ENCODE measurements at regions of chr12 and their contacts with region 1.

Region 1: GRCh38 chr12:106223485-106224354 is 24.1 kb downstream of the CKAP4 start:
- DNase-seq: peak; percentile 59 to 67 (median 60)
- H3K4me3 ChIP-seq: no peak overlapping the region
- H3K4me3 Mint-ChIP-seq: no peak overlapping the region
- H3K27ac ChIP-seq: no peak overlapping the region
- H3K27ac Mint-ChIP-seq: no peak overlapping the region
- H3K4me1 ChIP-seq: peaks cover 18 to 26% of the 10 kb centered on the region in 2 donors
- H3K4me1 Mint-ChIP-seq: peaks cover 26% of the 10 kb centered on the region
- H3K27me3 ChIP-seq: peaks cover 4 to 13% of the 10 kb centered on the region in 2 donors
- H3K27me3 Mint-ChIP-seq: peaks cover 13 to 36% (median 28%) of the 10 kb centered on the region in 3 donors
- CTCF ChIP-seq: peak; percentile 94

Region 2: DNA sequence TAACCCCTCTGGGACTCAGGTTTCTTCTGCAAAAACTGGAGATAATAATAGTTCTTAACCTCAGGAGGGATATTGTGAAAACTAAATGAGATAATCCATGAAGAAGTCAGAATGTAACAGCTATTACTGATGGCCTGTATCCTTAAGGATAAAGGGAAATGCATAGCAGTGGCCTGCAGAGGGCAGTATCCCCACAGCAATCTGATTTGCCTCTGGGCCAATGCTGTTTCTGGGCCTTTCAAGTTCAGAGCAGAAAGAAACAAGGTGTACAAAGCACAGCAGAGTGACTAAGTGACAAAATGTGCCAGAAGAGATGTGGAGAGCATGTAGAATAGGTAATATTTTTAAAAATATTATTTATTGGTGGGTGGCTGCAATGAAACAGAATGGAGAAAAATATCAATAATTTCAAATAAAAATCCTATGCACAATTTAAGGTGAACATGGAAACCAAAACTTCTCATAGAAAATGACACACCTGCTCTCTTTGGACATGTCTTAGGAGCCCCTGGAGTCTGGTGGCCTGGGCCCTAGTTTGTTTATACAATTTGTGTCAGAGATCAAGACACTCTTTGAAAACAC is 803.0 kb before region 1 on chr12:
- intact Hi-C with region 1: loop called in 1 of 2 experiments (anchors 10 kb)
- DNase-seq: peak; percentile 7 to 44 (median 38)
- H3K4me3 ChIP-seq: no peak overlapping the region
- H3K4me3 Mint-ChIP-seq: no peak overlapping the region
- H3K27ac ChIP-seq: no peak overlapping the region
- H3K27ac Mint-ChIP-seq: no peak overlapping the region
- H3K4me1 ChIP-seq: no peaks in the 10 kb centered on the region
- H3K4me1 Mint-ChIP-seq: no peaks in the 10 kb centered on the region
- H3K27me3 ChIP-seq: peaks cover 0 to 2% of the 10 kb centered on the region in 2 donors
- H3K27me3 Mint-ChIP-seq: peaks cover 14 to 16% (median 15%) of the 10 kb centered on the region in 3 donors
- CTCF ChIP-seq: peak; percentile 89

Region 3: GRCh38 chr12:106247674-106248311 is 24.1 kb after region 1 on chr12 and contains the start of gene CKAP4:
- intact Hi-C with region 1: loop called in 1 of 2 experiments (anchors 2 kb)
- DNase-seq: peak; percentile 53 to 67 (median 65)
- H3K4me3 ChIP-seq: peak within 1 kb of the TSS; percentile 60 to 90 (median 77)
- H3K4me3 Mint-ChIP-seq: peak within 1 kb of the TSS; percentile 86 to 88
- H3K27ac ChIP-seq: peak within 1 kb of the TSS; percentile 99
- H3K27ac Mint-ChIP-seq: peak within 1 kb of the TSS; percentile 96 to 99 (median 98)
- H3K4me1 ChIP-seq: peaks cover 76 to 81% of the 10 kb centered on the region in 2 donors
- H3K4me1 Mint-ChIP-seq: peaks cover 74% of the 10 kb centered on the region
- H3K27me3 ChIP-seq: no peaks in the 10 kb centered on the region
- H3K27me3 Mint-ChIP-seq: peaks cover 0 to 4% (median 0%) of the 10 kb centered on the region in 3 donors
- CTCF ChIP-seq: no peak
- polyA plus RNA-seq, gene CKAP4: 46.9 to 59.4 (median 55.9) TPM

Region 4: GRCh38 chr12:106282457-106283097 is 58.9 kb after region 1 on chr12:
- intact Hi-C with region 1: loop called (anchors 1 to 2 kb)
- DNase-seq: peak; percentile 72 to 88 (median 83)
- H3K4me3 ChIP-seq: no peak overlapping the region
- H3K4me3 Mint-ChIP-seq: no peak overlapping the region
- H3K27ac ChIP-seq: peak overlapping the region in 1 of 2 donors; percentile 63
- H3K27ac Mint-ChIP-seq: peak overlapping the region; percentile 65 to 91 (median 87)
- H3K4me1 ChIP-seq: peaks cover 14 to 26% of the 10 kb centered on the region in 2 donors
- H3K4me1 Mint-ChIP-seq: peaks cover 35% of the 10 kb centered on the region
- H3K27me3 ChIP-seq: peaks cover 10 to 13% of the 10 kb centered on the region in 2 donors
- H3K27me3 Mint-ChIP-seq: peaks cover 14 to 29% (median 19%) of the 10 kb centered on the region in 3 donors
- CTCF ChIP-seq: peak; percentile 94

Region 5: DNA sequence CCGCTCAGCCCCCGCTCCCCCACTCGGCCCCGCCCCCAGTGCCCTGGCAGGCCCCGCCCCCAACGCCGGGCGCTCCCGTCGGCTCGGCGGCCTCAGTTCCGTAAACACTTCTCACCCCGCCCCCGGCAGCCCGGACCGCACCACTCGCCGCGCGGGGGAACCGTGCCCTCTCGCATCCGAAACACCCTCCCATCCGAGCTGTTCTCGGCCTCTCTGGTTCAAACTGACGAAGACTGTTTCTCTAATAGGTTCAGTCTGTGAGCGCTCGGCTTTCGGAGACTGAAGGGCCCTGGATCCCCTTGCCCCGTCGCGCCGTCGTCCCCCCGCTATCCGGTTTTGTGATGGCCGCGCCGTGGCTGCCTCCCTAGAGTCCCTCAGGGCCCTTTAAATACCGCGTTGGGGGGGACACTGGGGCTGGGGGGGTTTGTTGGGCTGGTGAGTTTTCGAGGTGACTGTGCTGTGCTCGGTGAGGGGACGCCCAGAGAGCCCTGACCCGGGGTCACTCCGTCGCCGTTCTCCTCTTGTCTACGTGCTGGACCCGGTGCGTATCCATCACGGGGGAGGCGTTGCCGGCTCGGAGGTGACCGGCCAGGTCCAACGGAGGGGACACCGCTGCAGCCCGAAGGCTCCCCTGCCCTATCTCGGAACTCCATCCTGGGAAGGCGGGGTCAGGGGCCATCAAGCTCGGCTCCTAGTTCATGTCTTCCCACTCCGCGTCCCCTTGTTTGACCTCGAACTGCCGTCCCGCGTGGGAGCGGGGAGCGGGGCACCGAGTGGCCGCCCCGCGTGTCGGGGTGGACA is 78.9 kb after region 1 on chr12 and contains the start of gene TCP11L2:
- intact Hi-C with region 1: loop called in 1 of 2 experiments (anchors 5 kb)
- DNase-seq: peak; percentile 80 to 83 (median 83)
- H3K4me3 ChIP-seq: peak within 1 kb of the TSS; percentile 74 to 87 (median 86)
- H3K4me3 Mint-ChIP-seq: peak within 1 kb of the TSS; percentile 86 to 92
- H3K27ac ChIP-seq: peak within 1 kb of the TSS; percentile 86 to 98
- H3K27ac Mint-ChIP-seq: peak within 1 kb of the TSS; percentile 98 to 100 (median 99)
- H3K4me1 ChIP-seq: peaks cover 41 to 48% of the 10 kb centered on the region in 2 donors
- H3K4me1 Mint-ChIP-seq: peaks cover 50% of the 10 kb centered on the region
- H3K27me3 ChIP-seq: no peaks in the 10 kb centered on the region
- H3K27me3 Mint-ChIP-seq: no peaks in the 10 kb centered on the region
- CTCF ChIP-seq: no peak
- polyA plus RNA-seq, gene TCP11L2: 23.5 to 37.3 (median 35.8) TPM

Region 6: DNA sequence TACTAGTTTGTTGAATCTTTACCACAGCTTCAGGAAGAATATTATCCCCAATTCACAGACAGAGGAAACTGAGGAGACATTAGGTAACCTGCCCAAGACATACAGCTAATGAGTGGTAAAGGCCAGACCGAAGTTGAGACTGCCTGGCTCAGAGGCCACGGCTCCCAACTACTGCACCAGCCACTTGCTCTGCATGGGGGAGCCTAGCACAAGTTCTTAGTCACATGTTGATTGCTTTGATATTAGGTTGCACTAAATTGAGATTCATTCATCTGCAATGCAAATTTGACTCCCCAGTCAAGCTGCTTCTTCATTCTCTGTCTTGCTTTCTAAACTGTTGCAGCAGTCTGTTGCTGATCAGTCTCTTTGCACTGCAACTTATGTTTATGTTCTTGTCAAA is 107.9 kb after region 1 on chr12:
- intact Hi-C with region 1: loop called in 1 of 2 experiments (anchors 10 kb)
- DNase-seq: no peak
- H3K4me3 ChIP-seq: no peak overlapping the region
- H3K4me3 Mint-ChIP-seq: no peak overlapping the region
- H3K27ac ChIP-seq: no peak overlapping the region
- H3K27ac Mint-ChIP-seq: no peak overlapping the region
- H3K4me1 ChIP-seq: peaks cover 64 to 73% of the 10 kb centered on the region in 2 donors
- H3K4me1 Mint-ChIP-seq: peaks cover 72% of the 10 kb centered on the region
- H3K27me3 ChIP-seq: no peaks in the 10 kb centered on the region
- H3K27me3 Mint-ChIP-seq: peaks cover 0 to 2% (median 2%) of the 10 kb centered on the region in 3 donors
- CTCF ChIP-seq: no peak